Pancreas (tissue), 10 donors: ENCODE measurements at regions of chr12 and their contacts with region 1.

Region 1: DNA sequence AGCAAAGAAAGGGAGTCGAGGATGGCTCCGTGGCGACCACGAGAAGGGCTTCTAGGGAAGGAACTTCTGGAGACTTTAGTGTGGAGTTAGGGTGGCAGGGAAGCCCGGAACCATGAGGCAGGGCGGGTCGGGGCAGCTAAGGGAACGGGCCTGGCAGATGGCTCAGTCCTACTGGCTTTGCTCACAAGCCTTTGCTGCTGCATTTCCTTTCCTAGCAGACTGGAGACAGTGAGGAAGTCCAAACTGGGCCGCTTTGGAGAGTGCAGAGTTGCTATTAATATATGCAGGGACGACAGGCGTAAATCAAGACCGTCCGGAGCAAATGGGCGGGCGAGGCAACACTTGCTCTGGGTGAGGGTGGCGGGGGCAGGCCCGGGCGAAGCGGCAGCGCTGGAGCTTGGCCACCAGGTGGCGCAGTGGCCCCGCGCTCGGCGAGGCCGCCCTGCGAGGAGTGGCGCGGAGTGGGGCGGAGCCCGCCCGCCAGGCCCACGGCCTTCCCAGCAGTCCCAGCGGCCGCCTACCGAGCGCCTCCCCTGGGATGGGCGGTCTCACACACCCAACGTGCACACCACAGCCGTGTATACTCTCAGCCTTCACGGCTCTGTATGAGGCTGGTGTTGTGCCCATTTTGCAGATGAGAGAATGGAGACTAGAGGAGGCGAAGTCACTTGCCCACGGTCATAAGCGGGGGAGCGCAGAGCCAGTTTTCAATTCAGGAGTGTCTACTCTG is 24.4 kb upstream of the LRTM2 start:
- DNase-seq: peak; percentile 91 to 99 (median 95)
- ATAC-seq: peak; percentile 94 to 96 (median 95)
- H3K4me3 ChIP-seq: peak overlapping the region; percentile 37 to 61 (median 54)
- H3K27ac ChIP-seq: peak overlapping the region; percentile 2 to 66 (median 59)
- H3K4me1 ChIP-seq: peaks cover 0 to 6% (median 3%) of the 10 kb centered on the region in 3 donors
- H3K27me3 ChIP-seq: no peaks in the 10 kb centered on the region
- CTCF ChIP-seq: peak; percentile 98 to 99 (median 98)

Region 2: GRCh38 chr12:1644534-1645438 is 151.2 kb before region 1 on chr12:
- intact Hi-C with region 1: loop called in 1 of 3 experiments (anchors 10 kb)
- DNase-seq: peak; percentile 60 to 81 (median 66)
- ATAC-seq: peak in 3 of 4 donors; percentile 78 to 88 (median 80)
- H3K4me3 ChIP-seq: no peak overlapping the region
- H3K27ac ChIP-seq: no peak overlapping the region
- H3K4me1 ChIP-seq: no peaks in the 10 kb centered on the region
- H3K27me3 ChIP-seq: no peaks in the 10 kb centered on the region
- CTCF ChIP-seq: no peak

Region 3: GRCh38 chr12:1650260-1650977 is 145.5 kb before region 1 on chr12:
- intact Hi-C with region 1: loop called (anchors 5 to 10 kb)
- DNase-seq: no peak
- ATAC-seq: no peak
- H3K4me3 ChIP-seq: no peak overlapping the region
- H3K27ac ChIP-seq: no peak overlapping the region
- H3K4me1 ChIP-seq: no peaks in the 10 kb centered on the region
- H3K27me3 ChIP-seq: no peaks in the 10 kb centered on the region
- CTCF ChIP-seq: no peak